ENCODE measurements at regions of chr19 and their contacts with region 1.

Region 1: GRCh38 chr19:33186431-33187182 is 7.5 kb upstream of the LRP3 start:
- DNase-seq: no peak

Region 2: GRCh38 chr19:33125929-33126388 is 60.6 kb before region 1 on chr19:
- CTCF ChIA-PET with region 1: interaction called, 22 read pairs
- POLR2A ChIA-PET with region 1: interaction called, 3 read pairs
- DNase-seq: peak; percentile 75

Region 3: GRCh38 chr19:33143897-33144405 is 42.7 kb before region 1 on chr19:
- CTCF ChIA-PET with region 1: interaction called, 21 read pairs
- POLR2A ChIA-PET with region 1: no interaction called
- DNase-seq: peak; percentile 89